SK-N-SH (cell line): ENCODE measurements at regions of chr21 and their contacts with region 1.

Region 1: DNA sequence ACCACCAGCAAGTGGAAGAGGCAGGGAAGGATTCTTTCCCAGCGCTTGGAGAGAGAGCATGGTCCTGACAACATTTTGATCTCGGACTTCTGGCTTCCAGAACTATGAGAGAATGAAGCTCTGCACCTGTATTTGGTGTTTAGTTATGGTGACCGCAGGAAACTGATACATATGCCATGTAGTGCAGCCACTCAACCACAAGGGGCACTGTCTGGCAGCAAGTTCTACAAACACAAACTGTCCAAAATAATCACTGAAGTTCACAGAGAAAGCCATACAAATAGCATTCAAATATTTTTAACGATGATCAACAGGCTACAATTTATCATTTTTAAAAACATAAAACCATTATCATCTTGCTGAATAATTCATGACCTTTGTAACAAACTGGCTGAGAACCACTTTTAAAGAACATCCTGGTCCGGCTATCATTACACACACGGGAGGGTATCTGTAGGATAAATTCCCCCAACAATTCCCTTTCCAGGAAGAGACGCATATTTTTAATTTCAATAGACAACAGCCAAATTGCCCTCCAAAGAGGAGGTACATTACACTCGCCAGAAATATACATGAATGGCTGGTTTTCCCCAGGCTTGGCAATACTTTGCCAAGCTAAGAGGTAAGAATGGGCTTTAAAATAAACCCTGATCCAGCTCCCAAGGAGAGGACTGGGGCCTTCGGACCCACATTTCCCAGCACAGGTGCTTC is 9.2 kb upstream of the CBR3 start:
- DNase-seq: peak; percentile 60
- H3K4me3 ChIP-seq: no peak overlapping the region; a peak in 1 of 4 replicates
- H3K27ac ChIP-seq: no peak overlapping the region
- H3K4me1 ChIP-seq: no peaks in the 10 kb centered on the region
- H3K27me3 ChIP-seq: no peaks in the 10 kb centered on the region
- CTCF ChIP-seq: peak; percentile 94
- EP300 ChIP-seq: no peak
- RAD21 ChIP-seq: peak; percentile 60

Region 2: DNA sequence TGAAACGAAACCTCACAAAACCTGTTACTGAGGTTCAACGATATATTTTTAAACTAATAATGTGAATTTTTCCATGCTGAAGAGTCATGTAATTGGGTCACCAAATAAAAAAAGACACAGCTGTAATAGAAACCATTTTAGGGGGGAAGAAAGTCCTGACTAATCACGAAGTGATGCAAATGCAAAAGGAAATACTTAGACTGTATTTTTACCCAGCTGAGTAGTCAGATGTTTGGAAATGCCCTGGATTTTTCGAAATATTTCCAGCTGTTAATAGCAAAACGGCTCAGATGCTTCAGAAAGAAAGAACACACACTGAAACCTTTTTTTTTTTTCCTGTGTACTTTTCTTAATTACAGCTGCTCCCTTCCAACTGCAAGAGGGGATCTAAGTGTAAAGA is 275.6 kb before region 1 on chr21:
- CTCF ChIA-PET with region 1: no interaction called
- POLR2A ChIA-PET with region 1: no interaction called
- DNase-seq: no peak
- H3K4me3 ChIP-seq: no peak overlapping the region
- H3K27ac ChIP-seq: no peak overlapping the region
- H3K4me1 ChIP-seq: peaks cover 0 to 8% of the 10 kb centered on the region in 2 experiments; a peak in 2 of 4 replicates
- H3K27me3 ChIP-seq: no peaks in the 10 kb centered on the region; the same call in 1 of the 2 replicates
- CTCF ChIP-seq: no peak
- EP300 ChIP-seq: 0 out of 4 replicates have a peak, but pooled peaks of 1 of the 2 experiments have one; percentile 9
- RAD21 ChIP-seq: no peak

Region 3: GRCh38 chr21:36028127-36029069 is 97.3 kb before region 1 on chr21:
- CTCF ChIA-PET with region 1: interaction called, 10 read pairs
- POLR2A ChIA-PET with region 1: no interaction called
- DNase-seq: peak; percentile 83
- H3K4me3 ChIP-seq: no peak overlapping the region; a peak in 1 of 4 replicates
- H3K27ac ChIP-seq: no peak overlapping the region
- H3K4me1 ChIP-seq: peaks cover 0 to 4% of the 10 kb centered on the region in 2 experiments; a peak in 1 of 4 replicates
- H3K27me3 ChIP-seq: no peaks in the 10 kb centered on the region
- CTCF ChIP-seq: peak; percentile 93
- EP300 ChIP-seq: no peak
- RAD21 ChIP-seq: peak; percentile 98

Region 4: DNA sequence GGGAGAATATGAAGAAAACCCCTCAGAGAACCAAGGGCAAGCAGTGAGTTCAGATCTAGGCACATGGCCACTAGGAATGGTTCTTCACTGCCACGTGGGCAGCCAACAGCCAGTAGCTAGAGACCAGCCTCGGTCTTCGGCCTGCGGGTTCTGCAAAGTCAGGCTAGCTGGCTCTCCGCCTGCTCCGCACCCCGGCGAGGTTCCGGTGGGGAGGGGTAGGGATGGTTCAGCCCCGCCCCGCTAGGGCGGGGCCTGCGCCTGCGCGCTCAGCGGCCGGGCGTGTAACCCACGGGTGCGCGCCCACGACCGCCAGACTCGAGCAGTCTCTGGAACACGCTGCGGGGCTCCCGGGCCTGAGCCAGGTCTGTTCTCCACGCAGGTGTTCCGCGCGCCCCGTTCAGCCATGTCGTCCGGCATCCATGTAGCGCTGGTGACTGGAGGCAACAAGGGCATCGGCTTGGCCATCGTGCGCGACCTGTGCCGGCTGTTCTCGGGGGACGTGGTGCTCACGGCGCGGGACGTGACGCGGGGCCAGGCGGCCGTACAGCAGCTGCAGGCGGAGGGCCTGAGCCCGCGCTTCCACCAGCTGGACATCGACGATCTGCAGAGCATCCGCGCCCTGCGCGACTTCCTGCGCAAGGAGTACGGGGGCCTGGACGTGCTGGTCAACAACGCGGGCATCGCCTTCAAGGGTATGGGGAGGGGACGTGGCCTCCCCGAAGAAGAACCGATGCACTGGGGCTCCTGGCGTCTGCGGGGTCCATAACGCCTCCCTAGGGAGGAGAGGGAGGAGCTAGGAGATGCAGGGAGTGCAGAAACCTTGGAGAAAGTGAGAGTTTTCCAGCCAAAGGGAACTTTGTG is 55.7 kb before region 1 on chr21 and contains the start of gene CBR1:
- CTCF ChIA-PET with region 1: interaction called, 10 read pairs
- POLR2A ChIA-PET with region 1: no interaction called
- DNase-seq: peak; percentile 94
- H3K4me3 ChIP-seq: peak within 1 kb of the TSS; percentile 79 to 95
- H3K27ac ChIP-seq: peak within 1 kb of the TSS; percentile 59 to 87
- H3K4me1 ChIP-seq: peaks cover 5 to 19% of the 10 kb centered on the region in 2 experiments; a peak in 3 of 4 replicates
- H3K27me3 ChIP-seq: no peaks in the 10 kb centered on the region
- CTCF ChIP-seq: no peak
- EP300 ChIP-seq: no peak
- RAD21 ChIP-seq: no peak
- polyA plus RNA-seq, gene CBR1: 125 and 136 TPM in 2 replicates